GM10248 (cell line): ENCODE measurements at regions of chr21 and their contacts with region 1.

Region 1: DNA sequence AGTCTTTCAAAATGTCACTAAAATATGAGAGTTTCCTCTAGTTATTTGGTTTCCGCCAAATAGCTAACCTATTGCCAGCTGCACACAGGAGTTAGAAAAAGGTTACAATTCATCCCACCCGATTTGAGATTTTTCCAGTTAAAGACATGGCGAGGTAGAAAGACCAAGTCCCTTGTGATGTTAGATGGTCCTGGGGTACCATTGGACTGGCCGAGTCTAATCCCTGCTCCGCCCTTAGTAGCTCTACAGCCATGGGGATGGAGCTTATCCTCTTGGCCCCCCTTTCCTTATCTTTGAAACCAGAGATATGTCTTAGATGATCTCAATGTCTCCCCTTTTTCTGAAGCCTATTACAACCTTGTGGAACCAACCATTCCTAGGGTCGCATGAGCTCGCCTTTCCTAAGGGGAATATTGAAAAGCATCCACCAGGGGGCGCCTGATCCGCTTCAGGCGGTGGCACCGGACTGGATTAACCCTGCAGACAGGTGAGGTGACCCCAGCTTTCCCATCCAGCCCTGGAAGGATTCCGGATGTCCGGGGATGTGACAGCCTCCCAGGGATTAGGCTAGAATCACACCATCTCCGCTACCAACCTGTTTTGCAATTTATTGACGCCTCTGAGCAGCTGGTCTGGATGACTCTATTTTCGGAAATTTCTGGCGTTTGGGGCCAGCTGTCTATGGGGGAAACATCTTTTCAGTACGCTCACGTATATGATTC is 68.3 kb upstream of the SIM2 start:
- DNase-seq: peak; percentile 74
- CTCF ChIP-seq: peak; percentile 74

Region 2: DNA sequence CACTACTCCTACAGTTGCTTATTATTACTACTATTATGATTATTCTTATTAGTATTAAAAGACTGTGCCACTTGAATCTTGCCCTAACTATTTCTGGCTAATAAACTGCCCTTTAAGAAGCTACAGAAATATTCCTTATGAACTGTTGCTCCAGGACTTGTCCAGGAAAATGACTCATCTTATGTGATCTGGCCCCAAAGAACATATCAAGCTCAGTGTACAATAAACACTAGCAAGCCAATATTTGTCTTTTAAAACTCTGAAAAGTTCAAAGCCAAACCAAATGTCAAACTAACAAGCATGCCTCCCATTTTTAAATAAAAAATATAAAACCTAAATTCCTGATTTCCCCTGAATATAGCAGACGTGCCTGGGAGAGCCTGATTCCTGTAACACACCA is 20.4 kb before region 1 on chr21:
- CTCF ChIA-PET with region 1: interaction called, 10 read pairs
- POLR2A ChIA-PET with region 1: no interaction called
- DNase-seq: no peak
- CTCF ChIP-seq: no peak

Region 3: DNA sequence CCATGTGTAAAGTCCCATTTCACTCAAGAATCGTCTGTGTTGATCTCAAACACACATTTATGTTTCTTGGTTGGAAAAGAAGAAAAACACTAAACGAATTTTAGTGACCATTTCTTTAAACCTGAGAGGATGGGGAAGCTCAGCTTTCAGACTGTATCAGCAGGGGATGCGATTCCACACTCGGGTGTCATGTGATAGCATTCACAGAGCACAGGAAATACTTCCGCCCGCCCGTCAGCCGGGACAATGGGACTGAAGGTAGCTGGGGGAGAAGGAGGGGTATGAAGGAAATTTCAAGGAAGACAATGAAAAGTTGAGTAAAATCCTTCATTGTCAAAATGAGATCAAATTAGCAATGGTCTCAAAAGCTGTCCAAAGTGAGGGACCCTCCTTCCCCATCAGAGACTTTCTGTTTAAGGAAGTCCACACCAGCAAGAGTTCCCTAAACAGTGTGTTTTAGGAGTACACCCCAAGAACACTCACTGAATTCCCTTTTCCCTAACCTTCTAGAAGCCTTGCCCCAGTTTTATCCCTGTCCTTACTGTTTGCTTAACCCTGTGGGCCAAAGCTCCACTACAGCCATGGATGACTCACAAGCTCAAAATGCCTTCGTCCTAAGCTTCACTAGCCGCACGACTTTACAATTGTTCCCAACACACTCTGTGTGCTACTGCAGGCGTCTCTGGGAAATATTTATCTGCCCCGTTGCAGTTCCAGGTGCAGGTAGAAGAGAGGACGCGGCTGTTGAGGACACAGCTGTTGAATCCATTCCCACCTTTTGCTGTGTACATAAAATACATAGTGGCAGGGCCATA is 16.8 kb after region 1 on chr21:
- CTCF ChIA-PET with region 1: interaction called, 12 read pairs
- POLR2A ChIA-PET with region 1: no interaction called
- DNase-seq: no peak
- CTCF ChIP-seq: no peak